Activated CD4-positive, alpha-beta T cell treated with anti-CD3 and anti-CD28 coated beads for 36 hours (primary cell): ENCODE measurements at regions of chr6 and their contacts with region 1.

Region 1: GRCh38 chr6:105992315-105992961 is 93.7 kb upstream of the PRDM1 start:
- DNase-seq: peak; percentile 94
- ATAC-seq: peak; percentile 93
- H3K4me3 Mint-ChIP-seq: peak overlapping the region; percentile 88
- H3K27ac Mint-ChIP-seq: peak overlapping the region; percentile 91
- H3K4me1 Mint-ChIP-seq: peaks cover 32% of the 10 kb centered on the region
- H3K27me3 Mint-ChIP-seq: peaks cover 61% of the 10 kb centered on the region

Region 2: DNA sequence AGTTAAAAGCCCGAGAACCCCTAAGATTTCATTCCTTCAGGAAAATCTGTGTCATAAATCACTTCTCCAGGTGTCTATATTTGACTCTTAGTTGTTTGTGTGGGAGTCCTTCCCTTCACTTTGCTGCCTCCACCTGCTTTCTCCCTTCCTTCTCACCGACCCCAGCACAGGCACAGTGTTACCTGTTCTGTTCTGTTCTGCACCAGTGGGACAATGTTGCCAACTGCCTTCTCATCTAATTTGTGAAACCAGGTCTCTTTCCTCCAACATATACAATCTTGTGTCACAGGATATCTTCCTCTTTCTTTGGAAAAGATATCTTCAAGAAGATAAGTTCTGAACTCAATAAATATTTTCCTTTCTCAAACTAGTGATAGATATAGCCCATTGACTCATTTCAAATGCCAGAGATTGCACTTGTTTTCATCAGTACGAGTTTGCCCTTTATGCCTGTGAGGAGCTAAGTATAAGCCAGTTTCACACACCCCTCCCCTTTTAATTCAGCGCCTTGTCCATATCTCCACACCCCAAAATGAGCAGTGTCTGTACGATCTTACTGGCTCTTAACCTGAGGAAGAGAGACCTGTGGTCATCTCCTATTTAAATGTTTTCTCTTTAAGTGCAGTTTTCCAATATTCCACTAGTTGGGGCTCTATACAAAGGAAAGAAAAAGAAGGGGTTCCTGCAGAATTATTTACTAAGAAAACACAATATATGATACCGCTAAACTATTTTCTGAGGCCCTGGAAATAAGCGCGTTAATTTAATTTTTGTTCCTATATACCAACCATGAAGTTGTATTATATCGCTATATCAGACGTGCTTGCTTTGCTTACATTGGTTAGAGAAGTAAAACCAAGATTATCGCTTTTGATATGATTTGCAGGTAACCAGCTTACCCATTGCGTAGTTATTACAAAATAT is 507.9 kb before region 1 on chr6:
- CTCF ChIA-PET with region 1: interaction called, 3 read pairs
- POLR2A ChIA-PET with region 1: no interaction called
- intact Hi-C with region 1: loop called in 1 of 2 experiments (anchors 5 kb)
- DNase-seq: no peak
- ATAC-seq: peak; percentile 59
- H3K4me3 Mint-ChIP-seq: no peak overlapping the region
- H3K27ac Mint-ChIP-seq: peak overlapping the region; percentile 16
- H3K4me1 Mint-ChIP-seq: peaks cover 18% of the 10 kb centered on the region
- H3K27me3 Mint-ChIP-seq: peaks cover 11% of the 10 kb centered on the region

Region 3: GRCh38 chr6:105810105-105810921 is 182.1 kb before region 1 on chr6:
- CTCF ChIA-PET with region 1: interaction called, 4 read pairs
- POLR2A ChIA-PET with region 1: no interaction called
- intact Hi-C with region 1: loop called in 1 of 2 experiments (anchors 5 kb)
- DNase-seq: peak; percentile 78
- ATAC-seq: peak; percentile 90
- H3K4me3 Mint-ChIP-seq: no peak overlapping the region
- H3K27ac Mint-ChIP-seq: no peak overlapping the region
- H3K4me1 Mint-ChIP-seq: peaks cover 37% of the 10 kb centered on the region
- H3K27me3 Mint-ChIP-seq: peaks cover 6% of the 10 kb centered on the region